ENCODE measurements at regions of chr7 and their contacts with region 1.

Region 1: DNA sequence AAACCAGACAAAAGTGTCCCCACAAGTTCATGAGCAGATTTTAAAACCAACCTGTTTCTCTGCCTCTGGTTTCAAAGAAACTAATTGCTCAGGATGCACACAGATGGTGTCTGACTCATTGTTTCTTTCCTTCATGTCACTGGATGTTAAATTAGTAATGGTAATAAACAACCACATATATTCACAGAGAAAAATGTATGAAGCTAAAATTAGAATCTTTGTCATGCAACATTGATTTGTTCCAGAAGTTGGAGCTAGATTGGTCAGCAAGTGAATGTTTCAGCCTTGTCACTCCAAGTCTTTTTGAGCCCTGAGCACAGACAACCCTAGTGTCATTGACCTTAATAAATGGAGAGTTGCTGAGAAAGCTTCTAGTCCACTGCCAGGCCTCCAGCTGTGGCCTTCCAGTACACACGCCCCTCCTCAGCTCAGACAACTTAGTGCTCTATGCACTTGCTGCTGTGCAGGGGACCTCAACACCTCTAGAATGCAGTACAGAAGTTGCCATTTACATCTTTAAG is 175.9 kb downstream of the CCDC71L start:
- DNase-seq: peak; percentile 91
- H3K4me3 ChIP-seq: no peak overlapping the region
- H3K27ac ChIP-seq: peak overlapping the region; percentile 87
- H3K4me1 ChIP-seq: peaks cover 40% of the 10 kb centered on the region
- H3K27me3 ChIP-seq: no peaks in the 10 kb centered on the region
- CTCF ChIP-seq: no peak

Region 2: DNA sequence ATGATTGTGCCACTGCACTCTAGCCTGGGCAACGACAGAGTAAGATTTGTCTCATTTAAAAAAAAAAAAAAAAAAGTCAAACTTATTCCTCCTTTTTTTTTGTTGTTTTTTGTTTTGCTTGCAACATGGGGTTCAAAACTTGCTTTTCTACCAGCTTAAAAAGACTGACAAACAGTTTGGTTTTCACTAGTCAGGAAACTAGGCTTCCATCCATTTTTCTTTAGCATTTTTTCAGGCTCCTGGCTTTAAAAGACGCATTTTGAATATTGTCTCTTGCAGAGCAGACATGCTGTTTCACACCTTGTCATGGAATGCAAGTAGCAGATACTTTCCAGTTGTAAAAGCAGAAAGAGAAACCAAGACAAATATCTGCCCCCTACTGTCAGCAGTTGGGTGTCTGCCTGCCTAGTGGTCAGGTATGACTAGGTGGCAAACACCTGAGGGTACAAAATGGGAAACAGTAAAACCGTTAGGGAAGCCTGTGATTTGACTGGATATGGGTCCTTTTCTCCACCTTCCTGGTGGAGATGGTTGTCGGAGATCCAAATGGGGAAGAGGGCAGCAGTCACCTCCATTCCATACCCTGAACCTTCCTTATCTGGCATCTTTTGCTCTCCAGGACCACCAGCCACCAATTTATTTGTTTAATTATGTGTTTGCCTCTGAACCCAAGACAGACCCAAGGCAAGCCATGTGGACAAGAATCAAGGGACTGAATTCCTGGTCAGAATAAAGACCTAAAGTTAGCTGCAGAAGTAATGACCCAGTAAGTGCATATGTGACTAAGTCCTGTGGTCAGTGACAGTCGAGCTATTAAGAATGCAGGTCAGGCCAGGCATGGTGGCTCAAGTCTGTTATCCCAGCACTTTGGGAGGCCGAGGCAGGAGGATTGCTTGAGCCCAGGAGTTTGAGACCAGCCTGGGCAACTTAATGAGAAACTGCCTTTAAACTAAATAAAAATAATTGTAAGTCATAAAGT is 36.2 kb after region 1 on chr7:
- CTCF ChIA-PET with region 1: interaction called, 9 read pairs
- dilution Hi-C with region 1: loop called (anchors 5 kb)
- in situ Hi-C with region 1: no loop called
- intact Hi-C with region 1: no loop called
- DNase-seq: peak; percentile 19
- H3K4me3 ChIP-seq: no peak overlapping the region
- H3K27ac ChIP-seq: no peak overlapping the region
- H3K4me1 ChIP-seq: no peaks in the 10 kb centered on the region
- H3K27me3 ChIP-seq: no peaks in the 10 kb centered on the region
- CTCF ChIP-seq: peak; percentile 21 to 31